ENCODE measurements at regions of chr15 and their contacts with region 1.

Region 1: DNA sequence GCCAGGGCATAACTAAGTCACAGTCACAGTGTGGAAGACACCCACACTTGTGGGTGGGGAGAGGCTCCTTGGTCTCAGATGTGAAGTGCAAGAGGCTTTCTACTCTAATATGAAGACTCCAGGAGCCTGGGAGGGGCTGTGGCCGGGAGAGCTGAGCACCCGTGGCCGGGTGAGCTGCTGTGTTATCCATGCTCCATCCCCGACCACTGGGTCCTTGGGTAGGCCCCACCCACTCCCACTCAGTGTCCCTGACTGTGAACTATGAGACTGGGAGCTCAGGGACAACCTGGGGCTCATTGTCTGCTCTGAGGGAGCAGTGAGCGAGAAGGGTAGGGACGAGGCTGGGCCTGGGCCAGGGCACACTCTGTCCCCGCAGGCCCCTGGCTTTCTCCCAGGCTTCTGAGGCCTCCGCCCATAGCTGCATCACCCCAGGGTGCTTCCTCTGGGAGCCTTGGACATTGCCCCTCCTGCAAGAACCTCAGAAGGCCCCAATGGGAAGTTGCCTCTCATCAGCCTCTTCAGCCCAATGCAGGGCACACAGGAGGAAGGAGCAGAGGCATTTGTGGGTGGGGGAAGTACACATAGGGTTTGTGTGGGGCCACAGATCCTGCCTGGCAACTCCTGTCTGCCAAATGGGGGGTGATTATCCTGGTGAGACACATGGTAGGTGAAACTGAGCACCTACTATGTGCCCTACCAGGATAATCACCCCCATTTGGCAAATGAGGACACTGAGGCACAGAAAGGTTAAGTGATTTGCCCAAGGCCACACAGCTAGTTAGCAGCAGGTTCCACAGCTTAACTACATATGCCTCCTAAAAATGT is 2.4 kb downstream of the ANPEP start:
- DNase-seq: peak; percentile 91

Region 2: GRCh38 chr15:89799016-89799911 is 13.0 kb before region 1 on chr15:
- intact Hi-C with region 1: loop called in 1 of 2 experiments (anchors 2 kb)
- DNase-seq: no peak

Region 3: DNA sequence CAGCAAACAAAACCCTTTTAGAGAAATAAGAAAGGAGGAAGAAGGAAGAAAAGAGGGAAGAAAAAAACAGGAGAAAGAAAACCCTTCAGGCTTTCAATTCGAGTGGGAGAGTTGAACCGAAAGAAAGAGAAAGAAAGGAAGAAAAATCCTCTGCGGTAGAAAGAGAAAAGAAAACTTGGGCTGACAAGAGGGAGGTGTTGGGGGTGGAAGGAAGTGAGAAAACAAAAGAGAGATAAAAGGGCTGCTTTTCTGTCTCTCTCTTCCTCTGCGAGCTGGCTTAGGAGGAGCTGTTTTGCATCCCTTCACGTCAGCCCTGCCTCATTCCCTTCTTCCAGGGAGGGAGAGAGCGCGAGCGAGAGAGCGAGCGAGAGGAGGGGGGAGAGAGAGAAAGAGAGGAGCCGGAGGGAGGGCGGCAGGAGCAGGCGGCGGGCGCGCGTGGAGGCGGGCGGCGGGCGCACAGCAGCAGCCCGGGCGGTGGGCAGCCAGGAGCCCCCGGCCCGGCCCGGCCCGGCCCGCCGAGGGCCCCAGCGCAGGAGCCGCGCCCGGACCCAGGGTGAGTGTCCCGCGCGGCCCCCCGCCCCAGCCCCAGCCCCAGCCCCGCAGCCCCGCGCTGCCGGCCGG is 188.9 kb after region 1 on chr15 and contains the start of gene ZNF710:
- intact Hi-C with region 1: no loop called
- DNase-seq: peak; percentile 84
- total RNA-seq, gene ZNF710: 11.6 to 13.3 TPM

Region 4: GRCh38 chr15:90013503-90013937 is 201.3 kb after region 1 on chr15:
- intact Hi-C with region 1: no loop called
- DNase-seq: no peak

Measured in posterior vena cava (tissue), 2 donors.